ENCODE measurements at regions of chr18 and their contacts with region 1.

Region 1: DNA sequence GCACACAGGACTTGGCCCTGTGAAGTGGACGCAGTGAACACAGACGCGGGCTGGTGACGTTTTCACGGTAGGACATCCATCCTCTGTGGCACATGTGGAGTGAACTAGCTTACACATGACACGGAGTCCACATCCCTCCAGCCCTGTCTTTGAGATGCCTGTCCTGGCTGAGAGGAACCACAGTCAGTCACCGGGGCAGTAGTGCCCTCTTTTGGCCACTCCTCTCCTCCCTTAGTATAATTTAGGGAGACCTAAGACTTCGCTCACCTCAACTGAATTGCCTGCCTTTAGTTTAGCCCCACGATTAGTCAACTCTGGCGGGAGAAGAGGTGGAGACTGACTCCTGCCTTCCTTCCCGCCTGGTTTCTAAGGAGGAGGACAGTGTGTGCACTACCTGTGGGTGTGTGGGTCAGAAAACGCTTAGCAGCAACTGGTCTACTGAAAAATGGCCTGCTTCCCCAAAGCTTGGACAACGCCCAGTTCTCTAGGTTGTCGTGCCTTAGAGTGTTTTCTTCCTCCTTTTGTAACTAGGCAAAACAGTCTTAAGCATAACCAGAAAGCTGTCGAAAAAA is 70.6 kb downstream of the MBP start:
- DNase-seq: no peak
- ATAC-seq: peak in 3 of 4 donors; percentile 15 to 47 (median 43)
- H3K4me3 ChIP-seq: no peak overlapping the region
- H3K27ac ChIP-seq: peak overlapping the region in 8 of 12 donors; percentile 10 to 88 (median 54)
- H3K4me1 ChIP-seq: peaks cover 0 to 94% (median 26%) of the 10 kb centered on the region in 12 donors
- H3K27me3 ChIP-seq: no peaks in the 10 kb centered on the region
- CTCF ChIP-seq: peak in 5 of 12 donors; percentile 11 to 38 (median 17)
- POLR2A ChIP-seq: no peak

Region 2: DNA sequence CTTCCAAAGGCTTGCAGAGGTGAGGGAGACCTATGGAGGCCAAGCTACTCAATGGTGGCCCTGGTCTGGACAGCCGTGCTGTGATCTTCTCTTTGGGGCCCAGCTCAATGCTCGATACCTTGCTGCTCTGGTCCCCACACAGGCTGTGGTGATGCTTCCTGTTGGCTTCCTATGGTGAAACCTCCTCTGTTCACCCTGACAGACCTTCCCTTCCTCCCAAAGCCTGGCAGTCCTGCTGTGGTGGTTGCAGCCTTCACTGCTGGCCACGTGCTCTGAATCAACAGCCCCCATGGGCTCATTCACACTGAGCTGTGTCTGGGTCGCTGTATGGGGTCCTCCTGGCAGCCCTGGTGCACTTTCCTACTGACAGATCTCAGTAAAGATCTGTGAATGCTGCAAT is 156.6 kb after region 1 on chr18:
- intact Hi-C with region 1: loop called in 5 of 10 experiments (anchors 5 to 10 kb)
- DNase-seq: no peak
- ATAC-seq: no peak
- H3K4me3 ChIP-seq: no peak overlapping the region
- H3K27ac ChIP-seq: no peak overlapping the region
- H3K4me1 ChIP-seq: peaks cover 0 to 2% (median 0%) of the 10 kb centered on the region in 12 donors
- H3K27me3 ChIP-seq: peaks cover 0 to 5% (median 0%) of the 10 kb centered on the region in 9 donors
- CTCF ChIP-seq: no peak
- POLR2A ChIP-seq: no peak

Measured in heart left ventricle (tissue), 16 donors.